H1 (cell line): ENCODE measurements at regions of chr4 and their contacts with region 1.

Region 1: GRCh38 chr4:78092850-78093249 is 35.7 kb downstream of the FRAS1 start:
- DNase-seq: peak in 1 of 2 experiments; percentile 50
- H3K4me3 ChIP-seq: peak overlapping the region in 1 of 4 experiments; percentile 35; a peak in 2 of 8 replicates
- H3K27ac ChIP-seq: peak overlapping the region; percentile 81; the same call in 1 of the 2 replicates
- H3K4me1 ChIP-seq: peaks cover 5 to 14% (median 6%) of the 10 kb centered on the region in 4 experiments; a peak in 6 of 7 replicates
- H3K27me3 ChIP-seq: no peaks in the 10 kb centered on the region
- CTCF ChIP-seq: no peak
- EP300 ChIP-seq: peak in 1 of 2 experiments; percentile 36; a peak in 1 of 3 replicates
- POLR2A ChIP-seq: no peak
- RAD21 ChIP-seq: no peak

Region 2: GRCh38 chr4:78061939-78062570 is 30.8 kb before region 1 on chr4:
- CTCF ChIA-PET with region 1: interaction called, 36 read pairs
- POLR2A ChIA-PET with region 1: interaction called, 30 read pairs
- DNase-seq: no peak
- H3K4me3 ChIP-seq: peak overlapping the region in 1 of 4 experiments; percentile 90; a peak in 1 of 8 replicates
- H3K27ac ChIP-seq: no peak overlapping the region
- H3K4me1 ChIP-seq: peaks cover 4 to 33% (median 15%) of the 10 kb centered on the region in 4 experiments; a peak in 6 of 7 replicates
- H3K27me3 ChIP-seq: no peaks in the 10 kb centered on the region
- CTCF ChIP-seq: no peak
- EP300 ChIP-seq: no peak
- POLR2A ChIP-seq: no peak
- RAD21 ChIP-seq: no peak

Region 3: DNA sequence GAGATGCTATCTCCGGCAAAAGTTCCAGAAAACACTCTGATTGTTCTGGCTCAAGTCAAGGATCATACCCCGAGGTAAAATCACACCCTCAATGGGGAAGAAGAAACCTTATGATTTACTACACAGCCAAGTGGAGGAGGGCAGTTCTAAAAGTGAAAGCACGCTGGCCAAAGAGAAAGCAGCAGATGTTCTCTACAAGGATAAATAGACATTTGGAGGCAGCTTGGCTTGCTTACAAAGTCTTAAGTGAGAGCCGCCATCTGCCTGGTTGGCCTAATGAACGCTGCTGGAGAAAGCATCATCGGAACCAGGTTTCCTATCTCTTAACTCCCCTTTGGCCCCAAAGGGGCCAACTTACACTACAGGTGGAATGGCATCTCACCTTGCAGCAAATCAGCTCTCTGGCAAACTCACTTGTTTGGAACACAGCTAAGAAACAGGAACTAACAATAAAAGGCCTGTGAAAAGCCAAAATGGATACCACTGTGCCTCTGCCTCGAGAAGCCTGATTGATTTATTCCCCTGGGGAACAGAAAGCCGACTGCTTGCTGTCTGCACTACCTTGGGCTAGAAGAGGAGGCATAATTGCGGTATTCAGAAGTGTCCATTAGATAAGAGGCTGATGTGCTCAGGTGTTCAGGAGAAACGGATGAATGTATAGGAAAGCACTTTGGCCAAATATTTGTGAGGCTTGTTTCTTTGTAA is 13.0 kb before region 1 on chr4:
- CTCF ChIA-PET with region 1: interaction called, 13 read pairs
- POLR2A ChIA-PET with region 1: interaction called, 14 read pairs
- DNase-seq: no peak
- H3K4me3 ChIP-seq: no peak overlapping the region
- H3K27ac ChIP-seq: no peak overlapping the region
- H3K4me1 ChIP-seq: peaks cover 0 to 20% (median 12%) of the 10 kb centered on the region in 4 experiments; a peak in 6 of 7 replicates
- H3K27me3 ChIP-seq: no peaks in the 10 kb centered on the region
- CTCF ChIP-seq: no peak
- EP300 ChIP-seq: no peak
- POLR2A ChIP-seq: no peak
- RAD21 ChIP-seq: no peak